ENCODE measurements at regions of chr12 and their contacts with region 1.

Region 1: DNA sequence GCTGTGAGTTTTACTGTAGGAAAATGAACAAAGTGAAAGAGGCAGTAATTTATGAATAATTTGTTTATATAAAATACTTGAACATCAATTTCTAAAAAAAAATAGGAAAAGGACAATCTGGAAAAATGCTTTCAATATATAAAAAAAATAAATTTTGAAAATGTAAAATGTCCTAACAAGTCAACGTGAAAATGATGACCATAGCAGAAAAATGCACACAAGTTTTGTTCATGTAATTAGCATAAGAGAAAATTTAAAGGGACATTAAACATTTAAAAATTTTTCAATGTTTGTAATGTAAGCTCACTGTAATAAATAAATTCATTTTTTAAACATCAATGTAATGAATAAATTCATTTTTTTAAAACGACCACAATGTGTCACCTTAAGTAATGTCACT is 214.8 kb upstream of the ATXN7L3B start:
- DNase-seq: no peak
- ATAC-seq: no peak
- H3K4me3 ChIP-seq: no peak overlapping the region
- H3K27ac ChIP-seq: no peak overlapping the region
- H3K4me1 ChIP-seq: no peaks in the 10 kb centered on the region
- H3K27me3 ChIP-seq: no peaks in the 10 kb centered on the region
- CTCF ChIP-seq: no peak

Region 2: GRCh38 chr12:74227846-74228545 is 94.8 kb before region 1 on chr12:
- CTCF ChIA-PET with region 1: no interaction called
- POLR2A ChIA-PET with region 1: no interaction called
- in situ Hi-C with region 1: no loop called
- intact Hi-C with region 1: no loop called
- DNase-seq: no peak
- ATAC-seq: no peak
- H3K4me3 ChIP-seq: no peak overlapping the region
- H3K27ac ChIP-seq: no peak overlapping the region
- H3K4me1 ChIP-seq: no peaks in the 10 kb centered on the region
- H3K27me3 ChIP-seq: no peaks in the 10 kb centered on the region
- CTCF ChIP-seq: no peak

Region 3: DNA sequence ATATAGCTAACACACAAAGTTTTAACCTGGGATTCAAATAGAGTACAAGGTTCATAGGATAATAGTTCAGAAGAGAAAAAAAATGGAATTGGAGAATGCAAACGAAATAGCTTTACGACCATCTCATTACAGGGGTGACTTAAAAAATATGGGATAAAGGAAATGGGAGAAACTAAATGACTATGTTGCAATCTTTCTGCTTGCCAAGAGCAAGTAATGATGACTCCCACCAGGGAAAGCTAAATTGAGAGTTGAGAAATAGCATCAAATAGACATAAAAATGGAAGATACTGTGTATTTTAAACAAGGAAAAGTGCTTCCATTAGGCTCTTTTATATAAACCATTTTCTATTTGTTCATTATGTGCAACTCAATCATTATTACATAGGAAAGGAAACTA is 59.2 kb after region 1 on chr12:
- CTCF ChIA-PET with region 1: no interaction called
- POLR2A ChIA-PET with region 1: no interaction called
- in situ Hi-C with region 1: no loop called
- intact Hi-C with region 1: loop called (anchors 2 kb)
- DNase-seq: no peak
- ATAC-seq: no peak
- H3K4me3 ChIP-seq: no peak overlapping the region
- H3K27ac ChIP-seq: no peak overlapping the region
- H3K4me1 ChIP-seq: no peaks in the 10 kb centered on the region
- H3K27me3 ChIP-seq: no peaks in the 10 kb centered on the region
- CTCF ChIP-seq: no peak